A673 (cell line): ENCODE measurements at regions of chr1 and their contacts with region 1.

Region 1: GRCh38 chr1:111755331-111756123 is at the start of gene DDX20:
- DNase-seq: peak; percentile 98
- H3K4me3 ChIP-seq: peak within 1 kb of the TSS; percentile 92
- H3K27ac ChIP-seq: peak within 1 kb of the TSS; percentile 95
- H3K4me1 ChIP-seq: peaks cover 7% of the 10 kb centered on the region
- H3K27me3 ChIP-seq: no peaks in the 10 kb centered on the region
- CTCF ChIP-seq: peak; percentile 83
- total RNA-seq, gene DDX20: 22.8 and 26.1 TPM in 2 replicates

Region 2: GRCh38 chr1:111448918-111449702 is 306.4 kb before region 1 on chr1 and contains the starts of genes ATP5PB and WDR77:
- CTCF ChIA-PET with region 1: no interaction called
- POLR2A ChIA-PET with region 1: no interaction called
- intact Hi-C with region 1: loop called (anchors 5 kb)
- DNase-seq: peak; percentile 99
- H3K4me3 ChIP-seq: peak within 1 kb of the TSS; percentile 85
- H3K27ac ChIP-seq: peak within 1 kb of the TSS; percentile 91
- H3K4me1 ChIP-seq: peaks cover 19% of the 10 kb centered on the region
- H3K27me3 ChIP-seq: no peaks in the 10 kb centered on the region
- CTCF ChIP-seq: no peak
- total RNA-seq, gene ATP5PB: 316 and 344 TPM in 2 replicates
- total RNA-seq, gene WDR77: 56.1 and 67.9 TPM in 2 replicates

Region 3: DNA sequence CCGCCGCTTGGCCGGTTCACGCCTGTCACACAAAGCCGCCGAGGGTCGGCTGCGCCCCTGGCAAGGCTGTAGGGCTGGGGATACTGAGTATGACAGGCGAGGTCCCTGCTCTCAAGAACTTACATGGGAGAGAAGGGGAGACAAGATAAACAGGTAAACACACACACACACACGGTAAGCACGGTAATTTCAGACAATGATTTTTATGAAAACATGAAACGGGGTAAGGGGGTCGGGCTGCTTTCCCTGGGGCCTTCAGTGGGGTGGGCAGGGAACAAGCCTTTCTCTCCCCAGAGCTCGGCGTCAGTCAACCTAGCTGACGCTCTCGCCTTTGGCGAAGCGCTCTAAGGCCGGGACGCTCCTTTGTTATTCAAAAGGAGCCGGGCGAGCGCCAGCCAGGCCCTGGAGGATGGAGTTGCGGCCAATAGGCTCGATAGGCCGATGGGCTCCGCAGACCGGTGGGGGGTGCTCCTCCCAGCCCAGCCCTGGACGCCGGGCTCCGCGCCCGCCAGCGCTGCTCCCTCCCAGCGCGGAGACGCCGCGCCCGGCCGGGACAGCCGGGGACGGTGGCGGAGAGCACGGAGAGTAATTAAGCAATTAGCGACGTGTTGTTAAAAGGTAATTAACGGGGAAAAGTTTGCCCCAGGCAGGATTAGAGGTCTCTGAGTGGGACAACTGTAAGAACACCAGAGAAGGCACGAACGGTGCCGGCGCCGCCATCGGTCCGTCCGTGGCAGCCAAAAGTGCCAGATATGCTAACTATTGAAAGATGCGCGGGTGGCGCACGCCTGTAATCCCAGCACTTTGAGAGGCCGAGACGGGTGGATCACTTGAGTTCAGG is 15.4 kb before region 1 on chr1:
- CTCF ChIA-PET with region 1: interaction called, 4 read pairs
- POLR2A ChIA-PET with region 1: no interaction called
- intact Hi-C with region 1: loop called (anchors 1 kb)
- DNase-seq: peak; percentile 58
- H3K4me3 ChIP-seq: peak overlapping the region; percentile 59
- H3K27ac ChIP-seq: no peak overlapping the region
- H3K4me1 ChIP-seq: peaks cover 30% of the 10 kb centered on the region
- H3K27me3 ChIP-seq: peaks cover 14% of the 10 kb centered on the region
- CTCF ChIP-seq: no peak